Dendritic cell treated with granulocyte-macrophage colony-stimulating factor and Interleukin-4, amounts not matched to agents 40 ng/mL and 50 ng/mL, for 4 days (primary cell): ENCODE measurements at regions of chr4 and their contacts with region 1.

Region 1: DNA sequence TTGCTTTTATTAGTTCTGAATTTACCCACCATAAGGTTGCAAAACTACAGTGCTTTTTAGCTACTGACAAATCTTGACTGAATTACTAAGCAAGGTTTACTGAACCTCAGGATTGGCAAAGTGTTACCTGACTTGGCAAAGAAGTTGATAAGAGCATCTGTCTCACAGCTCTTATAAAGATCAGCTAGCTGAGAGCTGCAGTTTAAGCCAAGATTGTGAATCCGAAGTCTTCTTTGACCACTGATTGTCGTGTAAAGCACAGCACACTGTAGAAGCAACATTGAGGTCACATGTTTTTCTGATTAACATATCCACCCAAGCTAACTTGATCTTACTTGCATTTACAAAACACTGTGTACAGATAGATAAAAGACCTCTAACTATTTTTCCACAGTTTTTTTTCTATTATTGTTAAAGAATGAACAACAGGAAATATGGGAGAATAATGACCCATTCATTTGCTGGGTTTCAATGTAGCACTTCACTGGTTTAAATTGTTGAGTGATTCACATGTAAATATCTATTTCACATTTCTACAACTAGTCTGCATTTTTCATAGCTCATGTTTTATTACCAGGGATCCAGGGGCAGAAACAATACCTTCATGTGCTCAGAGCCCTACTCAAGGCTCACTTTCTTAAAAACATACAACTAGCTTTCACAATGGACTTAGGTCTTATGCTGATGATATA is 54.0 kb downstream of the METTL14 start:
- H3K4me3 Mint-ChIP-seq: no peak overlapping the region
- H3K27ac Mint-ChIP-seq: no peak overlapping the region
- H3K4me1 Mint-ChIP-seq: no peaks in the 10 kb centered on the region
- H3K27me3 Mint-ChIP-seq: no peaks in the 10 kb centered on the region

Region 2: DNA sequence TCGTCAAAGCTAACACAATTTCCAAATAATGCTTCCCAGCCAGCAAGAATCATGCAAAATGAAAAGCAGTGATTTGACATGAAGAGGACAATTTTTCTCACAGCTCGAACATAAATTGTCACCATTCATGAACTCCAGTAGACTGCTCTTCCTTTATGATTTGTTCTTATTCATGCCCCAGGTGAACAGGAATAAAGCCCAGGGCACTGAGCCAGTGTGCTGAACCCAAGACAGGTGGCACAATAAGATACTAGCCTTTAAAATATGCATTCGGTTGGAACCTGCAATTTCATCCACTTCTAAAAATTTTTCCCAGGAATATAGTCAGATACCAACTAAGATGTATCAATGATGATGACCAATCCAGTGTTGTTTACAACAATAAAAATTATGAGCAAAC is 526.1 kb before region 1 on chr4:
- intact Hi-C with region 1: no loop called
- H3K4me3 Mint-ChIP-seq: no peak overlapping the region
- H3K27ac Mint-ChIP-seq: no peak overlapping the region
- H3K4me1 Mint-ChIP-seq: no peaks in the 10 kb centered on the region
- H3K27me3 Mint-ChIP-seq: no peaks in the 10 kb centered on the region

Region 3: DNA sequence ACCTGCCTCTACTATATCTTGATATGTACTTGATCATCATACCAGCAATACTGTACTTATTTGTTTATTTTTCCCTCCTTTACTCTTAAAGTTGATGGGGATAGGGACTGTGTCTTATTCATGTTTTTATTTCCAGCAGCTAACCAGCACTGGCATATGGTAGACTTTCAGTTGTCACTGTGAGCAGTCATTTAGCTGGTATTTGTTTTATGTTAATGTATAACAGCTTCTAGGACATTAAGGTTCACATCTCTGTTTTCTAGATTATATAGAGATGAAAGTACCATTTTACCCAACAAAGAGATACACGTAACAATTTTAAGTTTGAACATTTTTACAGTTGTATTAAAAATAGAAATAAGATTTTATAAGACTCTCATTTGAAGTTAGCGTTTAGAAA is 36.0 kb before region 1 on chr4:
- intact Hi-C with region 1: loop called (anchors 5 kb)
- H3K4me3 Mint-ChIP-seq: no peak overlapping the region
- H3K27ac Mint-ChIP-seq: no peak overlapping the region
- H3K4me1 Mint-ChIP-seq: no peaks in the 10 kb centered on the region
- H3K27me3 Mint-ChIP-seq: no peaks in the 10 kb centered on the region